Thyroid gland (tissue), 4 donors: ENCODE measurements at regions of chr2 and their contacts with region 1.

Region 1: GRCh38 chr2:108448678-108449493 is at the start of gene GCC2:
- DNase-seq: peak; percentile 94 to 95
- H3K4me3 ChIP-seq: peak within 1 kb of the TSS; percentile 68 to 74 (median 71)
- H3K27ac ChIP-seq: peak within 1 kb of the TSS; percentile 83 to 95 (median 86)
- H3K4me1 ChIP-seq: peaks cover 0 to 4% of the 10 kb centered on the region in 2 donors
- H3K27me3 ChIP-seq: no peaks in the 10 kb centered on the region
- CTCF ChIP-seq: no peak
- POLR2A ChIP-seq: peak; percentile 5 to 95
- total RNA-seq, gene GCC2: 41.4 to 59.4 (median 54.0) TPM

Region 2: DNA sequence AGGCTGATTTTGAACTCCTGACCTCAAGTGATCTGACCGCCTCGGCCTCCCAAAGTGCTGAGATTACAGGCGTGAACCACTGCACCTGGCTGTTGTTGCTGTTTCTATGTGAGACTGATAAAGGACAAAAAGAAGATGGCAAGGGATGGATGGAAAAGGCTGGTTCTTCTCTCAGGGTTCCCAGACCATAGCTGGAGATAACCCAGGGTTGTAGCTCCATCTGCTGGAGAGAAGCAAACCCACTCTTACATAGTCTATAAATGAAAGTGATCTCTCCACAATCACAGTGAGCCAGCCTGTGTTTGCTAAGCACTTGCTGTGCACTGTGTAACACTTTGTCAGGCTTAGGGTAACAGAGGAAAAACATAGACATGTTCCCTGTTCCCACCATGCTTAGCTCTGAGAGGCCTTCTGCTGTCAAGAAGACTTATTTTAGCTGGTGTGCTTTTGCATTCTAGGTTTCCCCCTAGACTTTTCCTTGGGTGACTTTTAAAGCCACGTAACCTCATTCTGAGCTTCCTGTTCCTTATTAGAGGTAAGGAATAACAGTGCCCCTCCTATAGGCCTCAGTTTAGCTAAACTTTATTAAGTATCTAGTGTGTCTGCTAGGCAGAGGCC is 135.1 kb after region 1 on chr2:
- intact Hi-C with region 1: loop called (anchors 10 kb)
- DNase-seq: peak; percentile 59 to 62
- H3K4me3 ChIP-seq: no peak overlapping the region
- H3K27ac ChIP-seq: no peak overlapping the region
- H3K4me1 ChIP-seq: peaks cover 4 to 22% of the 10 kb centered on the region in 2 donors
- H3K27me3 ChIP-seq: no peaks in the 10 kb centered on the region
- CTCF ChIP-seq: peak; percentile 33 to 79 (median 77)
- POLR2A ChIP-seq: no peak